ENCODE measurements at regions of chr4 and their contacts with region 1.

Region 1: GRCh38 chr4:36399762-36400353 is 118.4 kb downstream of the DTHD1 start:
- DNase-seq: no peak
- H3K4me3 ChIP-seq: no peak overlapping the region
- H3K27ac ChIP-seq: no peak overlapping the region
- H3K4me1 ChIP-seq: no peaks in the 10 kb centered on the region
- H3K27me3 ChIP-seq: no peaks in the 10 kb centered on the region
- CTCF ChIP-seq: peak; percentile 69 to 77

Region 2: GRCh38 chr4:36351082-36351666 is 48.7 kb before region 1 on chr4:
- CTCF ChIA-PET with region 1: interaction called, 4 read pairs
- dilution Hi-C with region 1: no loop called
- in situ Hi-C with region 1: no loop called
- intact Hi-C with region 1: loop called (anchors 1 kb)
- DNase-seq: peak; percentile 34
- H3K4me3 ChIP-seq: no peak overlapping the region
- H3K27ac ChIP-seq: no peak overlapping the region
- H3K4me1 ChIP-seq: no peaks in the 10 kb centered on the region
- H3K27me3 ChIP-seq: no peaks in the 10 kb centered on the region
- CTCF ChIP-seq: peak; percentile 77 to 80

Region 3: DNA sequence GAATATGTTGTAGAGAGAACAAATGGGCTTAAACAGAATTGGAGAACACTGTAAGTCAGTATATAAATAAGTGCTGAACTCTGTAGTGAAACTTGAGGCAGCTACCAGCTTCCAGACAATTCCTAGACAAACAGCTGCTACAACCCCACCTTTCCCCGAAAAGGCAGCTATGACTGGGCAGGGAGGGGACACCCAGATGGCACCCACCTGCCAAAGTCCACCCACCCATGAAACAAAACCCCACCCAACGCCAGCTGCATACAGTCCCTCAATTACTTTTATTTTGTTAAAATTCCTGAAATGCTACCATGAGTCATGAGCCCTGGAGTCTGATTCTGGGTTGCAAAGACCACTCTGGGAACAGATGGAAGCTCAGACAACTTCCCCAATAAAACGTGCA is 1261.9 kb after region 1 on chr4:
- CTCF ChIA-PET with region 1: no interaction called
- dilution Hi-C with region 1: no loop called
- in situ Hi-C with region 1: no loop called
- intact Hi-C with region 1: no loop called
- DNase-seq: no peak
- H3K4me3 ChIP-seq: no peak overlapping the region
- H3K27ac ChIP-seq: no peak overlapping the region
- H3K4me1 ChIP-seq: peaks cover 32% of the 10 kb centered on the region
- H3K27me3 ChIP-seq: no peaks in the 10 kb centered on the region
- CTCF ChIP-seq: no peak

Measured in mammary epithelial cell (primary cell).